Activated CD4-positive, alpha-beta T cell treated with anti-CD3 and anti-CD28 coated beads for 36 hours (primary cell): ENCODE measurements at regions of chr7 and their contacts with region 1.

Region 1: GRCh38 chr7:96388620-96389383 is 66.9 kb upstream of the SLC25A13 start:
- DNase-seq: no peak
- ATAC-seq: no peak
- H3K4me3 Mint-ChIP-seq: no peak overlapping the region
- H3K27ac Mint-ChIP-seq: no peak overlapping the region
- H3K4me1 Mint-ChIP-seq: no peaks in the 10 kb centered on the region
- H3K27me3 Mint-ChIP-seq: peaks cover 2% of the 10 kb centered on the region

Region 2: GRCh38 chr7:94556028-94556427 is 1832.8 kb before region 1 on chr7:
- CTCF ChIA-PET with region 1: no interaction called
- POLR2A ChIA-PET with region 1: no interaction called
- intact Hi-C with region 1: loop called in 1 of 2 experiments (anchors 5 kb)
- DNase-seq: no peak
- ATAC-seq: no peak
- H3K4me3 Mint-ChIP-seq: no peak overlapping the region
- H3K27ac Mint-ChIP-seq: no peak overlapping the region
- H3K4me1 Mint-ChIP-seq: no peaks in the 10 kb centered on the region
- H3K27me3 Mint-ChIP-seq: no peaks in the 10 kb centered on the region

Region 3: GRCh38 chr7:98329100-98329790 is 1940.4 kb after region 1 on chr7:
- CTCF ChIA-PET with region 1: no interaction called
- POLR2A ChIA-PET with region 1: no interaction called
- intact Hi-C with region 1: no loop called
- DNase-seq: no peak
- ATAC-seq: no peak
- H3K4me3 Mint-ChIP-seq: no peak overlapping the region
- H3K27ac Mint-ChIP-seq: no peak overlapping the region
- H3K4me1 Mint-ChIP-seq: no peaks in the 10 kb centered on the region
- H3K27me3 Mint-ChIP-seq: peaks cover 1% of the 10 kb centered on the region